GM13977 (cell line): ENCODE measurements at regions of chr13 and their contacts with region 1.

Region 1: GRCh38 chr13:59391696-59392095 is 772.0 kb downstream of the DIAPH3 start:
- DNase-seq: peak; percentile 61
- CTCF ChIP-seq: peak; percentile 81

Region 2: DNA sequence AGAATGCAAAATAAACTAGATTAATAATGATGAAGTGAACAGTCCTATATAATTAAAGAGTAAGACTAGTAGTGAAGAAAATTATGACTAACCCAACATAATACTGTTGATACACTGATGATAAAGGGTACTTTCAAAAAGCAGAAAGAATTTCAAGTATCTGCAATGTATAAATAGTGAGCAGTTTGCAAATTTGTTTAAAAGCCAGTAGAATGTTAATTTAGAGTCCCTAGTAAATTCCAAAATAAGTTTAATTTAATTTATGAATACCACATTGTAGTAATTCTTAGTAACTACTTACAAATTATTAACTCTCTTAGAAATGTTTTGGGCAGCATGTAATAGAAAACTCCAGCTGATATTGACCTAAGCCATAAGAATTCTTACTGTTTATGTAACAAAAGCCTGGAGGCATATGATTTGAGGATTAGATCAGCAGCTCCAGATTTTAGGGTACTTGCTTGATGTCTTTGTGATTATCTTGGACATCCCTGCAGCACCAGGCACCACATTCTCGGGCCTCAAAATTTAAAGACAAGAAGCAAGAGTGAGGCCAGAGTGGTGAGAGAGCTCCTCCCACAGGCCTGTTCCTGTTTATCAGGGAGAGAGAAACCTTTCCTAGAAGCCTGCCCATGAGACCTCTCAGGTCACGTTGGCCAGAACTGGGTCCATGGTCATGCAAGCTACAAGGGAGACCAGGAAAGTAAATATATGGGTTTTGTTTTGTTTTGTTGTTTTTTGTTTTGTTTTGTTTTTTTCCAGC is 937.7 kb after region 1 on chr13:
- in situ Hi-C with region 1: loop called (anchors 25 kb)
- DNase-seq: peak; percentile 35
- CTCF ChIP-seq: peak; percentile 63